ENCODE measurements at regions of chr1 and their contacts with region 1.

Region 1: DNA sequence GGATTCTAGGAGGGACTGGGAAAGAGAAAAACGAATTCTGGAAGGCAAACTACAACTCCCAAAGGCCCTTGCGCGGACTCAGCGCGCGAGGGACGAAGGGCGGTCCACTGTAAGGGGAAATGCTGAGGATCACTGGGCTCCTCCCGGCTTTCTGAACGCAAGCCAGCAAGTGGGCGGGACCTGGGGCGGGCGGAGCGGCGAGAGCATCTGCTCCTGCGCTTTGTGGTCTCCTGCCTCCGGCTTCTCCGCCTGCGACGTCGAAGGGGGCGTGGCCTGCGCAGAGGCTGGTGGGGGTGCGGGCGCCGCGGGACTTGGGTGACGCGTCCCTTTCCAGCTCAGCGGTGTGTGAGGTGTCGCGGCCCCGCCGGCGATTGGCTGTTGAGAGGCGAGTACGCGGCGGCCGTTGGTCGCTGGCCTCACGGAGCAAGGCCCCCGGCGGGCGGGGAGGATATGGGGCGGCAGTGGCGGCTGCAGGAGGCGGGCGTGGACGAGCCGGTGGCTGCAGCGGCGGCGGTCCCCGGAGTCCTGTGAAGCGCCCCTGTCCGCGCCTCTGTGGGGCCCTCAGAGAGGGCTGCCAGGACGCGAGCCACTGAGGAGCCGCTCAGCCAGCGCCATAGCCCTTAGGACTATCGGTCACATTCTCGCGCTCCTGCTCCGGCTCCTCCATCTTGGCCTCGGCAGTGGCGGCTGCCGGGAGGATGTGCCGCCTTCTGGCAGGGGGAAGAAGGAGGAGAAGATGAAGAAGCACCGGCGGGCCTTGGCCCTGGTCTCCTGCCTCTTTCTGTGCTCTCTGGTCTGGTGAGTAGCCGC is at the start of gene SUCO:
- DNase-seq: peak; percentile 99 to 100 (median 100)
- ATAC-seq: peak; percentile 82
- H3K4me3 ChIP-seq: peak within 1 kb of the TSS; percentile 89
- H3K4me3 Mint-ChIP-seq: peak within 1 kb of the TSS; percentile 99
- H3K27ac ChIP-seq: peak within 1 kb of the TSS; percentile 97 to 99
- H3K27ac Mint-ChIP-seq: peak within 1 kb of the TSS; percentile 99
- H3K4me1 ChIP-seq: peaks cover 7% of the 10 kb centered on the region
- H3K4me1 Mint-ChIP-seq: peaks cover 51% of the 10 kb centered on the region
- H3K27me3 ChIP-seq: peaks cover 0 to 7% of the 10 kb centered on the region in 2 experiments
- H3K27me3 Mint-ChIP-seq: peaks cover 7% of the 10 kb centered on the region
- CTCF ChIP-seq: peak; percentile 37
- total RNA-seq, gene SUCO: 93.1 to 104 TPM

Region 2: DNA sequence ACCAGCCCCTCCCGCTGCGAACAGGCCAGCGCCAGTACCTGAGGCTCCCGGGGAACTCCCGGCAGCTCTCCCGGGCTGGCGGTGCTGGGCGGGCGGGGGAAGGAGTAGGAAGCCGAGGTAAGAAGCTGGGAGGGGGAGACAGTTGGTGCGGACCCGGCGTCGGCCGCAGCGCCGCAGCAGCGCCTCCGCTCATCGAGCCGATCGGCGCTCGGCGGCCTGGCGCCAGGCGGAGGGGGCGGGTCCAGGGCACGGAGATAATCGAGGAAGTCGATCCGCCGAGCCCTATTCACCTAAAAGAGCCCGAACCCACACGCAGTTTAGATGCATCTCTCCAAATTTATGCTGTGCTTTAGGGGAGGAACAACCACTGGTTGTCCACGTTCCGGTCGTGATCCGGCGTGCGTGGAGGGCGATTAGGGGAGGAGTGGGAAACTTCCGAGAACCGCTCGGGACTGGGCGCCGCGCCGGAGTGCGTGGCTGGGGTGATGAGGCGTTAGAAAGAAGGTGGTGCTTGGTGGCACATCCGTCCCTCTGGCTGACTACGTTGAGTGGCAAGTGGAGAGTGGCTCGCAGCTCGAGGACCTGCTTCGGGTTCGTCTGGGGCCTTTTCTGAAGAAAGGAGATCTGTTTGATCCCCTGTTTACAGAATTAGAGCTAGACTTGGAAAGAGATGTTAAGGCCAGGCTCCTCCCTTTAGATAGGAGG is 790.9 kb before region 1 on chr1 and contains the start of gene VAMP4:
- CTCF ChIA-PET with region 1: no interaction called
- POLR2A ChIA-PET with region 1: interaction called, 14 read pairs
- intact Hi-C with region 1: loop called in 1 of 2 experiments (anchors 5 kb)
- DNase-seq: peak; percentile 77 to 94 (median 84)
- ATAC-seq: peak; percentile 88
- H3K4me3 ChIP-seq: peak within 1 kb of the TSS; percentile 80
- H3K4me3 Mint-ChIP-seq: peak within 1 kb of the TSS; percentile 99
- H3K27ac ChIP-seq: peak within 1 kb of the TSS; percentile 95 to 96
- H3K27ac Mint-ChIP-seq: peak within 1 kb of the TSS; percentile 100
- H3K4me1 ChIP-seq: peaks cover 28% of the 10 kb centered on the region
- H3K4me1 Mint-ChIP-seq: peaks cover 63% of the 10 kb centered on the region
- H3K27me3 ChIP-seq: no peaks in the 10 kb centered on the region
- H3K27me3 Mint-ChIP-seq: no peaks in the 10 kb centered on the region
- CTCF ChIP-seq: no peak
- total RNA-seq, gene VAMP4: 8.1 to 12.1 TPM

Region 3: GRCh38 chr1:172154551-172154950 is 378.4 kb before region 1 on chr1:
- CTCF ChIA-PET with region 1: no interaction called
- POLR2A ChIA-PET with region 1: no interaction called
- intact Hi-C with region 1: no loop called
- DNase-seq: peak in 2 of 14 experiments; percentile 2 to 67
- ATAC-seq: peak; percentile 68
- H3K4me3 ChIP-seq: no peak overlapping the region
- H3K4me3 Mint-ChIP-seq: no peak overlapping the region
- H3K27ac ChIP-seq: no peak overlapping the region
- H3K27ac Mint-ChIP-seq: peak overlapping the region; percentile 53
- H3K4me1 ChIP-seq: no peaks in the 10 kb centered on the region
- H3K4me1 Mint-ChIP-seq: peaks cover 6% of the 10 kb centered on the region
- H3K27me3 ChIP-seq: no peaks in the 10 kb centered on the region
- H3K27me3 Mint-ChIP-seq: no peaks in the 10 kb centered on the region
- CTCF ChIP-seq: no peak

Region 4: DNA sequence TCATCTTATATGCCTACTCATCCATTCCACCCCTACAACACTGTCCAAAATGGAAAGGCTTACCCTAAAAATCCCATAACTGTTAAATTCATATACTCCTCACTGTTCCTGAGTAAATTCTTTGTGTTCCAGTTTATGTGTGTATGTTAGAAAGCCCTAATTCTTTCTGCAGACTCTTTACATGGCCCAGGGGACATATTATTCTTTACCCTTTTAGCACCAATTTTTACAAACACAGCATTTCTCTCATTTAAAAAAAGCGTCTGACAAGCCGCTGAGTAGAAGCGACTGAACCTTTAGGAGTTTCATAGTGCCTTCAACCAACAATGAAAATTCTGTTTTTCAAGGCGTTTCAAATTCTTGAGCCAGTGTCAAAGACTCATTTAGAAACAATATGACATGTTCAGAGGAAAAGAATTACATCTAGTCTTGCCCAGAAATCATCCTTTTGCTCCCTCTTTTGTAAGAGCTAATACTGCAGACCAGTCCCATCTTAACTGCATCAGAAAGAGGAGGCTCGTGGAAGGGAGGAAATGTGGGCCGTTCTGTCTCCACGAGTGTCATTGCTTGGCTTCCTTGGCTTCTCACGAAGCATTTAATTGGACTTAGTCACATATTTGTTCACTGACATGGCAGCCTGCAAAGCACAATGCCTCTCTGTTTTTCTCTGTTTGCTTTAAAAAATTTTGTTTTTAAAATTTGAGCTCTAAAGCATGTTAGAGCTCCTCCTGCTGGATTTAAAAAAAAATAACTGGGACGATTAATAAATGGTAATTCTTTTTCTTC is 133.7 kb before region 1 on chr1:
- CTCF ChIA-PET with region 1: no interaction called
- POLR2A ChIA-PET with region 1: interaction called, 14 read pairs
- intact Hi-C with region 1: no loop called
- DNase-seq: peak in 7 of 14 experiments; percentile 2 to 65 (median 60)
- ATAC-seq: peak; percentile 54
- H3K4me3 ChIP-seq: peak overlapping the region; percentile 10
- H3K4me3 Mint-ChIP-seq: peak overlapping the region; percentile 67
- H3K27ac ChIP-seq: no peak overlapping the region
- H3K27ac Mint-ChIP-seq: peak overlapping the region; percentile 81
- H3K4me1 ChIP-seq: peaks cover 18% of the 10 kb centered on the region
- H3K4me1 Mint-ChIP-seq: peaks cover 74% of the 10 kb centered on the region
- H3K27me3 ChIP-seq: no peaks in the 10 kb centered on the region
- H3K27me3 Mint-ChIP-seq: no peaks in the 10 kb centered on the region
- CTCF ChIP-seq: peak; percentile 87

Region 5: DNA sequence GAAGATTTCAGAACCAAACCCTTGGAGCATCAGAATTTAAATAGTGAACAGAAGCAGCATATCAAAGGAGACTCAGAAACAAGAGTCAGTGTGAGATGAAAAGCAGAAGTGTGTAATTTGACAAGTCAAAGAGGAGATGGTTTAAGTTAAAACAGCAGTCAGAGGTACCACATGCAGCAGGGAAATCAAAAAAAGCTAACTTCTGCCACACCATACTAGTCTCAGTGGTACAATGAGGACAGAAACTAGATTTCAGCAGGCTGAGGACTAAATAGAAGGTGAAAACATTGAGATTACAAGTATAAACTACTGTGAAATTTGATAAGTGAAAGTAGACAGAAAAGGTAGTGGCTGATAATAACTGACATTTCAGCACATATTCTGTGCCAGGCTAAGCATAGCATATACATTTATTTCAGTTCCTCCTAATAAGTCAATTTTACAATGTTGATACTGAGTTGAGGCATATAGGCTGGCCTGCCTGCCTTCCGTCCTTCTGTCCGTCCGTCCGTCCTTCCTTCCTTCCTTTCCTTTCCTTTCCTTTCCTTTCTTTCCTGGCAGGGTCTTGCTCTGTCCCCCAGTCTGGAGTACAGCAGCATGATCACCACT is 12.6 kb after region 1 on chr1:
- CTCF ChIA-PET with region 1: interaction called, 5 read pairs
- POLR2A ChIA-PET with region 1: interaction called, 28 read pairs
- intact Hi-C with region 1: no loop called
- DNase-seq: no peak
- ATAC-seq: no peak
- H3K4me3 ChIP-seq: no peak overlapping the region
- H3K4me3 Mint-ChIP-seq: no peak overlapping the region
- H3K27ac ChIP-seq: no peak overlapping the region
- H3K27ac Mint-ChIP-seq: no peak overlapping the region
- H3K4me1 ChIP-seq: peaks cover 13% of the 10 kb centered on the region
- H3K4me1 Mint-ChIP-seq: peaks cover 48% of the 10 kb centered on the region
- H3K27me3 ChIP-seq: no peaks in the 10 kb centered on the region
- H3K27me3 Mint-ChIP-seq: no peaks in the 10 kb centered on the region
- CTCF ChIP-seq: no peak

Region 6: GRCh38 chr1:172969611-172970010 is 436.7 kb after region 1 on chr1:
- CTCF ChIA-PET with region 1: no interaction called
- POLR2A ChIA-PET with region 1: no interaction called
- intact Hi-C with region 1: no loop called
- DNase-seq: no peak
- ATAC-seq: no peak
- H3K4me3 ChIP-seq: no peak overlapping the region
- H3K4me3 Mint-ChIP-seq: no peak overlapping the region
- H3K27ac ChIP-seq: no peak overlapping the region
- H3K27ac Mint-ChIP-seq: no peak overlapping the region
- H3K4me1 ChIP-seq: no peaks in the 10 kb centered on the region
- H3K4me1 Mint-ChIP-seq: no peaks in the 10 kb centered on the region
- H3K27me3 ChIP-seq: no peaks in the 10 kb centered on the region
- H3K27me3 Mint-ChIP-seq: no peaks in the 10 kb centered on the region
- CTCF ChIP-seq: no peak

Region 7: DNA sequence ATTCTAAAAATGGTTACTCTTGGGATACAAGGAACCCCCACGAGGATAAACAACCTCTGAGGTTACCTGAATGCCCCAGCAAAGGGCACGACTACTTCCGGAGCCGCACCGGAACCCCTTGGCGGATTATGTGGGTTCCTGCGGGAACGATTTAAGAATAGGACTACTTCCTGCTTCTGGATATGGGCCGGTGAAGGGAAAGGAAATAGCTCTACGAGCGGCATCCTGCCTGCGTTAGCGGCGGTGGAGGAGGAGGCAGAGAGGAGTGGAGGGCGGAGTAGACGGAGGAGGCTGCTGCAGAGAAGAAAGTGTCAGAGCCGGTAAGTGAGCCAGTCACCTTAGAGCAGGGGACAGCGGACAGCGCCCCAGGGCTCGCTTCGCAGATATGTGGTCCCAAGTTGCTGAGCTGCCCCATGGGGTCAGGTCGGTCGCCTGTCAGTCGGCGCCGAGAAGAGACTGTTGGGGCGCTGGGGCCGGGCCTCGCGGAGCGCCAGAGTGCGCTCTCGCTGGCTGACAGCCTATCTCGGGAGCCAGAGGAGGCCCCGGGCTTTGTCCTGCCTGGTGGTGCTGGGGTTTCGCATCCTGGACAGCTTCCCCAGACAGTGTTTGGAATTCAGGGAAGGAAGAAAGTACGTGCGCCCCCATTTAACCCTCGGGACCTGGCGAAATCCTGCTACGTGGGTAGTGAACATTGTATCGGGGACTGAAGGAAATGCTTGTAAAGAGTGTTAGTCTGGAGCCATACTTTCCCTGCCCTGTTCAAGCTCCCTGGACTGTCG is 1182.0 kb after region 1 on chr1 and contains the start of gene KLHL20:
- CTCF ChIA-PET with region 1: no interaction called
- POLR2A ChIA-PET with region 1: interaction called, 8 read pairs
- intact Hi-C with region 1: loop called in 1 of 2 experiments (anchors 10 kb)
- DNase-seq: peak; percentile 70 to 94 (median 81)
- ATAC-seq: peak; percentile 97
- H3K4me3 ChIP-seq: peak within 1 kb of the TSS; percentile 63
- H3K4me3 Mint-ChIP-seq: peak within 1 kb of the TSS; percentile 97
- H3K27ac ChIP-seq: peak within 1 kb of the TSS; percentile 73 to 81
- H3K27ac Mint-ChIP-seq: peak within 1 kb of the TSS; percentile 91
- H3K4me1 ChIP-seq: peaks cover 8% of the 10 kb centered on the region
- H3K4me1 Mint-ChIP-seq: peaks cover 36% of the 10 kb centered on the region
- H3K27me3 ChIP-seq: peaks cover 4 to 19% of the 10 kb centered on the region in 2 experiments
- H3K27me3 Mint-ChIP-seq: peaks cover 18% of the 10 kb centered on the region
- CTCF ChIP-seq: no peak
- total RNA-seq, gene KLHL20: 29.4 to 30.4 TPM

Region 8: GRCh38 chr1:174022080-174022975 is 1489.4 kb after region 1 on chr1 and contains the start of gene RC3H1:
- CTCF ChIA-PET with region 1: no interaction called
- POLR2A ChIA-PET with region 1: interaction called, 5 read pairs
- intact Hi-C with region 1: loop called in 1 of 2 experiments (anchors 5 kb)
- DNase-seq: peak; percentile 80 to 94 (median 88)
- ATAC-seq: peak; percentile 91
- H3K4me3 ChIP-seq: peak within 1 kb of the TSS; percentile 97
- H3K4me3 Mint-ChIP-seq: peak within 1 kb of the TSS; percentile 99
- H3K27ac ChIP-seq: peak within 1 kb of the TSS; percentile 85 to 90
- H3K27ac Mint-ChIP-seq: peak within 1 kb of the TSS; percentile 91
- H3K4me1 ChIP-seq: peaks cover 27% of the 10 kb centered on the region
- H3K4me1 Mint-ChIP-seq: peaks cover 55% of the 10 kb centered on the region
- H3K27me3 ChIP-seq: no peaks in the 10 kb centered on the region
- H3K27me3 Mint-ChIP-seq: no peaks in the 10 kb centered on the region
- CTCF ChIP-seq: no peak
- total RNA-seq, gene RC3H1: 38.0 to 40.4 TPM